Activated CD4-positive, alpha-beta memory T cell treated with anti-CD3 and anti-CD28 coated beads for 36 hours (primary cell): ENCODE measurements at regions of chr15 and their contacts with region 1.

Region 1: DNA sequence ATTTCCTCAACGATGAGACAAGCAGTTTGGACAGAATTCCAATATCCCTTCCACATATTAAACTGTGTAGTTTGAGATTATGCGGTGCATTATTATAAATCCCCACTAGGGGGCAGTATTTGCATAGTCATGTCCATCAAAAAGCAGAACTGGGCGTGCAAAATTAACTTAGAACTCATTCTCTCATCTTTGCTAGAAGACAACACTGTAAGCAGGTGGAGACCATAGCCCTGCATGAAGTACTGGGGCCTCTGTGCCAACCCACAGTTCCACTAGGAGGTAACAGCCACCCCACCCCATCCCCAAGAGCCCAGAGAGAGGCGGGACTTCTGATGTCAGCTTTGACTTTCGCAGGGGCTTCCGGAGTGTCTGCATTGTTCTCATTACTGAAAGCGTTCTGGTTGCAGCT is 106.6 kb upstream of the TMC3 start:
- DNase-seq: no peak
- H3K4me3 Mint-ChIP-seq: no peak overlapping the region
- H3K27ac Mint-ChIP-seq: no peak overlapping the region
- H3K4me1 Mint-ChIP-seq: no peaks in the 10 kb centered on the region
- H3K27me3 Mint-ChIP-seq: no peaks in the 10 kb centered on the region

Region 2: DNA sequence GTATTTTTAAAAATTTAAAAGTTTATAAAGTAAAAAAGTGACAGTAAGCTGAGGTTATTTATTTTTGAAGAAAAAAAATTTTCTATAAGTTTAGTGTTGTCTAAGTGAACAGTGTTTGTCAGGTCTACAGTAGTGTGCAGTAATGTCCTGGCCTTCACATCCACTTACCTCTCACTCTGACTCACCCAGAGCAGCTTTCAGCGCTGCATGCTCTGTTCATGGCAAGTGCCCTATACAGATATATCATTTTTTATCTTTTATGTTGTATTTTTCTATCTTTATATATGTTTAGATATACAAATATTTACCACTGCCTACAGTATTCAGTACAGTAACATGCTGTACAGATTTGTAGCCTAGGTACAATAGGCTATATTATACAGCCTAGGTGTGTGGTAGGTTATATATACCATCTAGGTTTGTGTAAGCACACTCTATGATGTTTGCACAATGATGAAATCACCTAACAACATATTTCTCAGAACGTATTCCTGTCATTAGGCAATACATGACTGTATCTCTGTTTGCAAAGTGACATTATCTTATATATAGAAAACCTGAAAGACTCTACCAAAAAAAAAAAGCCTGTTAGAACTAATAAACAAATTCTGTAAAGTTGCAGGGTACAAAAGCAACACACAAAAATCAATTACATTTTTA is 30.7 kb before region 1 on chr15:
- CTCF ChIA-PET with region 1: no interaction called
- POLR2A ChIA-PET with region 1: no interaction called
- intact Hi-C with region 1: no loop called
- DNase-seq: no peak
- H3K4me3 Mint-ChIP-seq: no peak overlapping the region
- H3K27ac Mint-ChIP-seq: no peak overlapping the region
- H3K4me1 Mint-ChIP-seq: no peaks in the 10 kb centered on the region
- H3K27me3 Mint-ChIP-seq: peaks cover 7% of the 10 kb centered on the region

Region 3: DNA sequence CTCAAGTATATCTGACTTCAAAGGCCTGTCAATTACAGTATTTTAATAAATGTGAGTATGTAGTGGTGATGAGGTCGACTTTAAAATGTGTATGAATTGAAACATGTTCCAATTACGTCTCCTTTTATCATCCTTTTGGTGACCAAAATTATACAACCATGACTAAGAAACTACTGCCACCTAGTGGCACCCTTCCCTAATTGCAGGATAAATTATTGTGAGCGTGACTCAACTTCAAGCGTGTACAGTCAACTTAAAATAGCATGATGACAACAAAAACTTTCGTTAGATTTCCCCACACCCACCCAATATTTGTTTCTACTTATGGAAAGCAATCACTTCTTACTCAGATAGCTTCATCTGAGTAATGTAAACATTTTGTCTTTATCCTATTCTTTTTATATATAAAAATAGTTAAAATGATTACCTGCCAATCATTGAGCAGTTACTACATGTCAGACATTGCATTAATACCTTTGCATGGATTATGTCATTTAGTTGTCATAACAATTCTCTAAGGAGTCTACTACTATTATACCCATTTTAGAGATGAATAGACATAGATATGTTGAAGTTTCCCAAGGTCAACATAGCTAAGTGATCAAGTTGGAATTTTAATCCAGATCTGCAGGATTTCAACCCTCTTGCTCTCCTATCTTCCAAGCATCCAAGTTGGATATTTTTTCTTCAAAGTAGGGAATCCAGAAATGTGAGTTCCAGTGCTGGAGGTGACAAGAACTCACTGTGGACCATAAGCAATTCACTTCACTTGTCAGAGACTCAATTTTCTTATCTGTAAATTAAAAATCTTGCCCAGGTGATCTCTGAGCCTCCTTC is 459.2 kb after region 1 on chr15:
- CTCF ChIA-PET with region 1: no interaction called
- POLR2A ChIA-PET with region 1: no interaction called
- intact Hi-C with region 1: loop called (anchors 1 kb)
- DNase-seq: peak; percentile 34
- H3K4me3 Mint-ChIP-seq: no peak overlapping the region
- H3K27ac Mint-ChIP-seq: no peak overlapping the region
- H3K4me1 Mint-ChIP-seq: no peaks in the 10 kb centered on the region
- H3K27me3 Mint-ChIP-seq: peaks cover 7% of the 10 kb centered on the region

Region 4: DNA sequence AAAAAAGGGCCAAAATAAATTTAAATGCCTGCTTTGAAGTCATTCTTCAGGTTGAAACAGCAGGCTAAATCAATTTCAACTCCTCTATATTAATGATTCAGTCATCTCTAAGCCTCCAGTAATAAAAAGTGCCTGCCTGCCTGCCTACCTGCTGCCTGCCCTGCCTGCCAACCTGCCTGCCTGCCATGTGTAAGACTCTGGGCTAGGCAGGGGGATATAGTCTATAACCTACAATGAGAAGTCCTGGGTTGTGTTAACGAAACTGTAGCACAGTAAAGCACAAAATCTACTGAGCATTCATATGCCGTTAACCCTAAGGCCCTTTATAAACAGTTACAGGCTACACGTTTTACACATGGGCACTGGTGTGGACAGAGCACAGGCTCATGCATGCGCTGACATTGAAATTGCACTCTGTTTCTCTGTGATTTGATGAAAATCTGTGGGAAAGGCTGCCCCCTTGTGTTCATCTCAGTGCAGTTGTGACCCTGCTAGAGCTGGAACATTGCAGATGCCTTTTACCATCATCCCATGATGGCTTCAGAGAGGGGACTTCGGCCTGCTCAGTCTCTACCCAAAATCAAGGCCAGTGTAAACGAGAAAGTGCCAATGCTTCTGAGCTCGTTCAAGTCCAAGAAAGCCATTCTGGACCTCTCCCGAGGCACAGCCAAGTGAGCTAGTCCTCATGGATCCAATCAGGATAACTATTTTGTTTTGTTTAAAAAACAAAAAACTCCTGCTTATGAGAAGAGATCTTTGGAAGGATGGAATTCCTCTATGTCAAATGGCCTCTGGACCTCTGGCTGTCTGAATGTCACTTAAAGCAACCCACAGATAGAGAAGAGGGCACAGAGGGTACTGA is 717.3 kb after region 1 on chr15:
- CTCF ChIA-PET with region 1: interaction called, 3 read pairs
- POLR2A ChIA-PET with region 1: no interaction called
- intact Hi-C with region 1: loop called (anchors 2 kb)
- DNase-seq: peak; percentile 62
- H3K4me3 Mint-ChIP-seq: no peak overlapping the region
- H3K27ac Mint-ChIP-seq: no peak overlapping the region
- H3K4me1 Mint-ChIP-seq: no peaks in the 10 kb centered on the region
- H3K27me3 Mint-ChIP-seq: no peaks in the 10 kb centered on the region